ENCODE measurements at regions of chr14 and their contacts with region 1.

Region 1: DNA sequence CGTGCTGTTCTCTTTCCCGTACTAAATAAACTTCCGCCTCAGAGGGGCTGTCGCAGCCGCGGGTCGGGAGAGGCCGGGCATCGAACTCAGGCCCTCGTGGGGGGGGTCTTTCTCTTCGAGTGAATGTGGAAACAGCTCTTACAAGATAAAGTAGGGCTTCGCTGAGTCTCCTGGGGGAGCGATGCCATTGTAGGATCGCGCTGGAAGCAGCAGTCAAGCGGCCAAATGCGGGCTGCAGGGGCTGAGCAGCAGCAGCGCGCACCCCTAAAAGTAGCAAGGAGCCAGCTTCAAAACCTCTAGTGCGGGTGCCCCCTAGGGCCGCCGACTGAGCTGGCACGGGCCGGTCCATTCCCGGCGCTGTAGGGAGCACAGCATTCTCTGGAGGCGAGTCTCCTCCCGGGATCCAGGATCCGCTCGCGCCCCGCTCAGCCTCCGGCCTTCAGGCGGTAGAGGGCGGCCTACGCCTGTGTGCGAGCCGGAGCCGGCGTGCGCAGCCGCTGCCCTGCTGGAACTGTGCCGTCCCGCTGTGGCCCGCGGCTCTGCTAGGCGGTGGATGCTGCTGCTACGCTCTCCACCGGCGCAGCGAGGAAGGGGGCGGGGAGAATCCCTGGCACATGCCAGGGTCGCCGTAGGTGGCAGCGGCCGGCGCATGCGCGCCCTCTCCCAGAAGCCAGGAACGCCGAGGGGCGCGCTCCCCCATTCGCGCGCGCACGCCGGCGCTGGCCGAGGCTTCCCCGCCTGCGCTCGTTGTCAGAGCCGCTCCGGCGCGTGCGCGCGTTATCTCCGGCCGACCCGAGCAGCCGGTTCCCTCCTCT is at the start of gene FUT8:
- DNase-seq: peak; percentile 35 to 67 (median 44)
- ATAC-seq: peak; percentile 90
- H3K4me3 ChIP-seq: peak within 1 kb of the TSS; percentile 57
- H3K27ac ChIP-seq: peak within 1 kb of the TSS; percentile 49; the same call in 2 of the 3 replicates
- H3K4me1 ChIP-seq: peaks cover 0 to 17% of the 10 kb centered on the region in 2 experiments; a peak in 1 of 5 replicates
- H3K27me3 ChIP-seq: no peaks in the 10 kb centered on the region
- CTCF ChIP-seq: peak; percentile 45 to 71 (median 46); a peak in 5 of 6 replicates
- EP300 ChIP-seq: no peak
- POLR2A ChIP-seq: no peak
- RAD21 ChIP-seq: peak; percentile 59 to 61
- polyA plus RNA-seq, gene FUT8: 4.1 to 6.0 TPM

Region 2: DNA sequence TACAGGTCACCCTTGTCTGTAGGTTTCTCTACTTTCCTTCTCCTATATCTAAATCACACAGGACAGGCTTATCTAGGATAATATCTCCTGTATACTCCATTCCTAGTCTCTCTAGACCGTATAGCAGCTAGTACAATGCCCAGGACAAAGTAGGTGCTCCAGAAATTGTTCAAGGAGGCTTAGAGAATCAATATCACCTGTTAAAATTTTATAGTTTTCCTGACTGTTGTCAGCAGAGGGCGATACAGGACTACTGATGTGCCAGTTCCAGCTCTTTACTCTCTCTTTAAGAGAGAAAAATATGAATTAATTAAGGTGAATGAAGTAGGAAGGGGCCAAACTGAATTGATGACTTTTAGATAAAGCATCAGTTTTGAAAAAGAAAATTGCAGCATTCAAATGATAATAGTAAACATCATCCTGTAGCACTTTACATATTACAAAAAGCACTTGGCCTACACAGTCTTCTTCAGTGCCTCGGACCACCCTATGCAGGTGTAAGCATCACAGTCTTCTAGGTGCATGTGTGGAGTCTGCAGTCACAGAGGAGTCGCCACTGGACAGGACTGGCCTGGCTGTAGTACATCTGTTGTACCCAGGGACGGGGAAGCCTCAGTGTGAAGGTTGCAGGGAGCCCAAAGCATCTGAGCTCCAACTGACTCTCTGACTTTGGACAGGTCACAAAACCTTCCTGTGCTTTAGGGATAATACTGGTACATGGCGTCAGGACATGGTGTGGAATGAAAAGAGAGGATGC is 248.0 kb before region 1 on chr14:
- CTCF ChIA-PET with region 1: no interaction called
- POLR2A ChIA-PET with region 1: no interaction called
- in situ Hi-C with region 1: no loop called
- intact Hi-C with region 1: loop called (anchors 2 kb)
- DNase-seq: peak; percentile 35 to 64 (median 36)
- ATAC-seq: peak; percentile 75
- H3K4me3 ChIP-seq: no peak overlapping the region
- H3K27ac ChIP-seq: no peak overlapping the region
- H3K4me1 ChIP-seq: no peaks in the 10 kb centered on the region
- H3K27me3 ChIP-seq: no peaks in the 10 kb centered on the region
- CTCF ChIP-seq: peak; percentile 47 to 76 (median 52); a peak in 5 of 6 replicates
- EP300 ChIP-seq: no peak
- POLR2A ChIP-seq: no peak
- RAD21 ChIP-seq: peak; percentile 87 to 90

Region 3: DNA sequence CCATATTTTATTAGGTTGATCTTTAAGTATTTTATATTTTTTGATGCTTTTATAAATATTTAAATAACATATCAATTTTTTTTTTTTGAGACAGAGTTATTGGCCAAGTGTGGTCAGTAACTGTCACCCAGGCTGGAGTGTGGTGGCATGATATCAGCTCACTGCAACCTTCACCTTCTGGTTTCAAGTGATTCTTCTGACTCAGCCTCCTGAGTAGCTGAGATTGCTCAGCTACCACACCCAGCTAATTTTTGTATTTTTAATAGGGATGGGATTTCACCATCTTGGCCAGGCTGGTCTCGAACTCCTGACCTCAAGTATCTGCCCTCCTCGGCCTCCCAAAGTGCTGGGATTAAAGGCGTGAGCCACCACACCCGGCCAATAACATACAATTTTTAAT is 71.4 kb after region 1 on chr14:
- CTCF ChIA-PET with region 1: no interaction called
- POLR2A ChIA-PET with region 1: no interaction called
- in situ Hi-C with region 1: no loop called
- intact Hi-C with region 1: loop called (anchors 5 kb)
- DNase-seq: peak in 2 of 4 experiments; percentile 19 to 61
- ATAC-seq: peak; percentile 62
- H3K4me3 ChIP-seq: no peak overlapping the region
- H3K27ac ChIP-seq: peak overlapping the region; percentile 56; the same call in 1 of the 3 replicates
- H3K4me1 ChIP-seq: peaks cover 0 to 12% of the 10 kb centered on the region in 2 experiments; a peak in 2 of 5 replicates
- H3K27me3 ChIP-seq: no peaks in the 10 kb centered on the region
- CTCF ChIP-seq: no peak
- EP300 ChIP-seq: peak; percentile 57; the same call in 1 of the 2 replicates
- POLR2A ChIP-seq: no peak
- RAD21 ChIP-seq: no peak

Region 4: DNA sequence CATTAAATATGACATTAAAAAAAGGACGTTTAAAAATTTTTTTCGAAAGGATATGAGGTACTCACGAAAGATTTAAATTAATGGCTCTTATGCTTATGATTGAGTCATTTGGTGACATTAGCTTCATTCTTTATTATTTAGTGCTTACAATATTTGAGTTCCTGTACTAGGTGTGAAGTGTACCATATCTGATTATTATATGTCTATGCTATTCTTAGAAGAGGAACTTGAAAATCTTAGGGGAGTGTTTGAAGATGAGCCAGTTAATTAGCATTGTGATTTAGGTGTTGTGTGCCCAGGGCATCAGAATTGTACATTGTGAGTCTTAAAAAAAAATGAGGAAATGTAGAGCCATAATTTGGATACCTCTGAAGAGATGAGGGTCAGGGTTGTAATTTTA is 118.9 kb after region 1 on chr14:
- CTCF ChIA-PET with region 1: no interaction called
- POLR2A ChIA-PET with region 1: no interaction called
- in situ Hi-C with region 1: no loop called
- intact Hi-C with region 1: no loop called
- DNase-seq: no peak
- ATAC-seq: no peak
- H3K4me3 ChIP-seq: no peak overlapping the region
- H3K27ac ChIP-seq: no peak overlapping the region
- H3K4me1 ChIP-seq: no peaks in the 10 kb centered on the region
- H3K27me3 ChIP-seq: no peaks in the 10 kb centered on the region
- CTCF ChIP-seq: no peak
- EP300 ChIP-seq: no peak
- POLR2A ChIP-seq: no peak
- RAD21 ChIP-seq: no peak

Region 5: DNA sequence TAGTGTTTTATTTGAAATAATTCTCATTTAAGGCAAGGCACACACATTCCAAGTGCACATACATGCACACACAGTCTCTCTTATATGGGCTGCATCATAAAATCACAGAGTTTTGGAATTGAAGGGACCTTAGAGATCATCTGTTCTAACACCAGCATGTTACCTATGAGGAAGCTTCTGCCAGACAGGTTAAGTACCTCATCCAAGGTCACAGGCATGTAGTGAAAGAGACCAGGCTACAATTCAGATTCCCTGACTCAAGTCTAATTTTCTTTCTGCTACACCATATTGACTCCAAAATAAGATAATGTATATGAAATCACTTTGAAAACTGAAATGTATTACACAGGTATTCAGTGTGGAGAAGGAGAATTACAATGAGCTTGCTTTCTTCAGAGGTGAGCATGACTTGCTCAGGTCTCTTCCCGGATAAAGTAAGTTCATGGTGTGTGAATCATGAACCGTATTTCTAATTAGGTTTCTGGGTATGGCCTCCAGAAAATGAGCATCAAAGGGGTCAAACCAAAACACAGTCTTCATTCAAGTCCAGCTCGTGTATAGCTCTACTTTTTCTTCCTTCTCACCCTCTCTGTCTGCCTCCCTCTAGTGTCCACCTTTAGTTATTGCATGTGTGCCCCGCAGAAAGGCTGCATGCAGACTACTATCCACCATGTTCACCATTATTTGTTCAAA is 412.2 kb after region 1 on chr14:
- CTCF ChIA-PET with region 1: interaction called, 6 read pairs
- POLR2A ChIA-PET with region 1: interaction called, 4 read pairs
- in situ Hi-C with region 1: loop called (anchors 25 kb)
- intact Hi-C with region 1: loop called (anchors 2 kb)
- DNase-seq: peak; percentile 54 to 66 (median 62)
- ATAC-seq: peak; percentile 87
- H3K4me3 ChIP-seq: no peak overlapping the region
- H3K27ac ChIP-seq: no peak overlapping the region
- H3K4me1 ChIP-seq: no peaks in the 10 kb centered on the region
- H3K27me3 ChIP-seq: peaks cover 9 to 27% of the 10 kb centered on the region in 2 experiments; a peak in 4 of 5 replicates
- CTCF ChIP-seq: peak; percentile 60 to 74 (median 65)
- EP300 ChIP-seq: no peak
- POLR2A ChIP-seq: no peak
- RAD21 ChIP-seq: peak; percentile 67 to 69

Region 6: DNA sequence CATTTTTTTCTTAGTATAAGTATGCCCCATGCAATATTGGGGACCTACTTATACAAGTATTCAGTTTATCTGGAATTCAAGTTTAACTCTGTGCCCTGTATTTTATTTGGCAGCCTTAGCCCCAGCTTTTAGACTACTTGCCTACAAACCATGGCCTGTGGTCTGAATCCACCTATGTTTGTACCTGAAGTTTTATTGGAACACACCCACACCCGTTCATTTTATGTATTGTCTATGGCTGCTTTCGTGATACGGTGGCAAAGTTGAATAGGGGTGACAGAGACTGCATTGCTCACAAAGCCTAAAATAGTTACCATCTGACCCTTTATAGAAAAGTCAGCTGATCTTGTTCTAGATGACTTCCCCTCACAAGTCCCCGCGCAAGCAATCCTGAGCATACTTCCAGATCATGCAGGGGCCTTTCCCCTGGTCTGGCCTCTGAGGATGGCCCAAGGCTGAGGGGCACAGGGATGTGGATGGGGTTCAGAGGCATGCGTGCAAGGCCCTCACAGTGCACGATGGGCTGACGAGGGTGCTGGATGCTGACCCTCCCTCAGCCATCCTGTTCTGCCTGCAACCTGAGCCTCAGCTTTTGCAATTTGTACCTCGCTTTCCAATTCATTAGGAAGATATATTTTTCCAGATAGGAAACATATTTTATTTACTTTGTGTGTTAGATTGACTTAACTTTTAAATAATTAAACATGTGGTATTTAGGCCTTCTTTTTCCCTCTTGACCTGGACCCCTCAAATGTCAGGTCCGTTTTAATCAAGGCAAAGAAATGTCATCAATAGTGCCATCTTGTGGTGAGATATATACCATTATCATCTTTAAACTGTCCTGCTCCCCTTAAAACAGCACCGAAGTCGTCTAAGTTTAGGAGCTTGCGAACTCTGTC is 546.7 kb after region 1 on chr14:
- CTCF ChIA-PET with region 1: interaction called, 3 read pairs
- POLR2A ChIA-PET with region 1: no interaction called
- in situ Hi-C with region 1: loop called (anchors 25 kb)
- intact Hi-C with region 1: loop called (anchors 2 kb)
- DNase-seq: peak; percentile 24 to 30 (median 26)
- ATAC-seq: peak; percentile 76
- H3K4me3 ChIP-seq: no peak overlapping the region
- H3K27ac ChIP-seq: no peak overlapping the region
- H3K4me1 ChIP-seq: no peaks in the 10 kb centered on the region
- H3K27me3 ChIP-seq: no peaks in the 10 kb centered on the region; a peak in 1 of 5 replicates
- CTCF ChIP-seq: peak in 1 of 3 experiments; percentile 50; a peak in 3 of 6 replicates
- EP300 ChIP-seq: no peak
- POLR2A ChIP-seq: no peak
- RAD21 ChIP-seq: peak; percentile 50 to 63